Panc1 (cell line): ENCODE measurements at regions of chr5 and their contacts with region 1.

Region 1: GRCh38 chr5:14861123-14861765 is 10.3 kb downstream of the ANKH start:
- DNase-seq: no peak
- ATAC-seq: no peak
- H3K4me3 ChIP-seq: no peak overlapping the region
- H3K27ac ChIP-seq: no peak overlapping the region
- H3K4me1 ChIP-seq: no peaks in the 10 kb centered on the region
- H3K27me3 ChIP-seq: no peaks in the 10 kb centered on the region
- CTCF ChIP-seq: no peak

Region 2: DNA sequence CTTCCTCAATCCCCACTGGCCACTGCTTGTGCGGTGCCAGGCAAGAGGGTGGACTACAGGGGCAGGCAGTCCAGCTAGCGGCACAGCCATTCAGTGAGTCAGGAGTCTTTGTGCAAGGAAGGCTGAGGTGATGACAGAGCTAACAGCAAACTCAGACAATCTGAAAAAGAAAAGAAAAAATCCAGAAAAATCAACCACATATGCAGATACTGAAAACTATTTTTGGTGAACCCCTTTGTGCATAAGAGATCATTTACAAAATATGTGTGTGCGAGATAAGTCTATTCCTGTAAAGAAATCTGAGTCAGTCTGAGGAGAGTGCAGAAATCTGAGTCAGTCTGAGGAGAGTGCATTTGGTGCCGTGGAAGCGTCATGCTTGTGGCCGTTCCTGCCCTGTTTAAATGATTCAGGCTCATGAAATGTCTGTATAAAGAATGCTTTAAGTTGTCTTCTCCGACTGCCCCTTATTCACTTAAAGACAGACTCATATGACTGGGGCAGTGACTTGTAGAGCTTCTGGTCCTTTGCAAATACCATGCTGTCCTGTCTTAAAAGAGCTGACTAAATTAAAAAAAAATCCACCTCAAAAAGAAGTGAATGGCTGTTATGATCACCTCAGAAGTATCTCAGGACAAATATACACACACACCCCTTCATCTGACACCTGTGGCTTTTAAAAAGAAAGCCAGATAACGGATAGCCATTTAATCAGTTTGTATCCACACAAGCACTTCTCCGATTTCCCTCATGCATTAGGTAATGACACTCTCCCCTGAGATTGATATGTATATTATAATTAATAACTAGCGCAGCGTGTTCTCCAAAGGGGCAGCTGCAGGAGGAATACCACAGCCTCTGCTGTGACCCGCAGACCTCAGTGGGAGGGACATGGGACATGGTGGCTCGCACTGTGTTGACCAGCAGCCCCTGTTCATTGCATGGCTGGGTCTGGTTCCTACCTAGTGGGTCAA is 670.8 kb before region 1 on chr5:
- CTCF ChIA-PET with region 1: no interaction called
- POLR2A ChIA-PET with region 1: no interaction called
- in situ Hi-C with region 1: no loop called
- intact Hi-C with region 1: loop called (anchors 5 kb)
- DNase-seq: peak; percentile 98
- ATAC-seq: peak; percentile 81
- H3K4me3 ChIP-seq: peak overlapping the region; percentile 1 to 38; a peak in 2 of 4 replicates
- H3K27ac ChIP-seq: peak overlapping the region; percentile 99
- H3K4me1 ChIP-seq: peaks cover 99% of the 10 kb centered on the region
- H3K27me3 ChIP-seq: no peaks in the 10 kb centered on the region
- CTCF ChIP-seq: no peak